HEK293 (cell line): ENCODE measurements at regions of chr6 and their contacts with region 1.

Region 1: DNA sequence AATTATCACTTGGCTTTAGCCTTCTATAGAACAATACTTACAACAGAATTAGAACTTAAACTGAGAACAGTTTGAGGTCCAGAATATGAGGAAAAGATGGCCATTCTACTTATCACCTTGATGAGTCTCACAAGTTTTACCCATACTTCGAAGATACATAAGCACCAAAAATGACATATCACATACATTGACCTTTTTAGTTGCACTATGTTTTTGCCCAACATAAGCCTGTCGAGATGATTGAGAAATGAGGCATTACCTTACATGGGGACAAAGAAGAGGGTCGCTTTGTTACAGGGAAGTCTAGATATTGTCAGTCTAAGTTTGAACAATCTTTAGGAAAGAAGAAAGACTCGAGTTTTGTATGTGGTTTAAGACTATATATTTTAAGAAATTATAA is 48.4 kb upstream of the MEI4 start:
- H3K4me3 ChIP-seq: no peak overlapping the region
- H3K27ac ChIP-seq: no peak overlapping the region
- H3K4me1 ChIP-seq: no peaks in the 10 kb centered on the region
- CTCF ChIP-seq: no peak

Region 2: DNA sequence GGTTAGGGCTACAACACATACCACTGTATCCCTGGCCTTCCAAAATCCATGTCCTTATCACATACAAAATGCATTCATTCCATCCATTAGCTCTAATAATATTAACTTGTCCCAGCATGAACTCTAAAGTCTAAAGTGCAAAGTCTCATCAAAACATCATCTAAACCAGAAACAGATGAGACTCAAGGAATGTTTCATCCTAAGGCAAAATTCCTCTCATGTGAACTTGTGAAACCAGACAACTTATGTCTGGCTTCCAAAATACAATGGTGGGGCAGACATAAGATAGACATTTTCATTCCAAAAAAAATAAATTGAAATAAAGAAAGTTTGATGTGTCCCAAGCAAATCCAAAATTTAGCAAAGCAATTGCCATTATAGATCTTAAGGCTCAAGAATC is 398.5 kb before region 1 on chr6:
- CTCF ChIA-PET with region 1: no interaction called
- POLR2A ChIA-PET with region 1: no interaction called
- H3K4me3 ChIP-seq: no peak overlapping the region
- H3K27ac ChIP-seq: no peak overlapping the region
- H3K4me1 ChIP-seq: no peaks in the 10 kb centered on the region
- CTCF ChIP-seq: no peak

Region 3: GRCh38 chr6:77620278-77620882 is 15.9 kb after region 1 on chr6:
- CTCF ChIA-PET with region 1: interaction called, 11 read pairs
- POLR2A ChIA-PET with region 1: no interaction called
- H3K4me3 ChIP-seq: no peak overlapping the region
- H3K27ac ChIP-seq: no peak overlapping the region
- H3K4me1 ChIP-seq: no peaks in the 10 kb centered on the region
- CTCF ChIP-seq: no peak